Mammary epithelial cell (primary cell): ENCODE measurements at regions of chr5 and their contacts with region 1.

Region 1: GRCh38 chr5:59673438-59674058 is 220.0 kb downstream of the PDE4D start:
- DNase-seq: peak; percentile 37
- H3K4me3 ChIP-seq: no peak overlapping the region
- H3K27ac ChIP-seq: no peak overlapping the region
- H3K4me1 ChIP-seq: no peaks in the 10 kb centered on the region
- H3K27me3 ChIP-seq: no peaks in the 10 kb centered on the region
- CTCF ChIP-seq: peak; percentile 58 to 67

Region 2: DNA sequence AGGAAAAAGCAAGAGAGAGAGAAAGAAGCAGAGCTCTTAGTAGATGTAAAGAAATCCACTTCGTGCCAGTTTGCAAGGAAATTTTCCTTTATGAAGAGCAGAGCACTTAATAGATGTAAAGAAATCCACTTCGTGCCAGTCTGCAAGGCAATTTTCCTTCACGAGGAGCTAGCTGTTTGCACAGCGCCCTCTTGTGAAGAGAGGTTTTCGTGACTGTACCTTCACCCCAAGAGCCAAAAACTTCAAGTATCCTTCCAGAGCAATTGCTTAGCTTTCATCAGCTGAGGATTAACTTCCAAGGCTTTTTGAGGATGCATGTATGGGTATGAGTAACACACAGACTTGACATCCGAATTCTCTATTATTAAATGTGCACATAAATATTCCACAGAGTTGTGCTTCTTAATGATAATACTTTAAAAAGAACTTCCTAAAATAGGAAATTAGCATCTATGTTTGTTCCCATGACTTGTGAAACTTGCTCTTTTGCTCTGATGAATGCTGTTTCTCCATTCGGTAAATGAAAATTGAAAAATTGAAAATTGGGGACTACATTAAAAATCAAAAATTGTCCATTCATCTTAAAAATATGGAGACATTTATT is 305.7 kb before region 1 on chr5:
- CTCF ChIA-PET with region 1: interaction called, 11 read pairs
- dilution Hi-C with region 1: no loop called
- in situ Hi-C with region 1: no loop called
- intact Hi-C with region 1: no loop called
- DNase-seq: peak; percentile 44
- H3K4me3 ChIP-seq: no peak overlapping the region
- H3K27ac ChIP-seq: no peak overlapping the region
- H3K4me1 ChIP-seq: no peaks in the 10 kb centered on the region
- H3K27me3 ChIP-seq: no peaks in the 10 kb centered on the region
- CTCF ChIP-seq: peak; percentile 78 to 88

Region 3: GRCh38 chr5:59380350-59380951 is 293.1 kb before region 1 on chr5:
- CTCF ChIA-PET with region 1: no interaction called
- dilution Hi-C with region 1: no loop called
- in situ Hi-C with region 1: loop called (anchors 10 to 25 kb)
- intact Hi-C with region 1: no loop called
- DNase-seq: peak; percentile 71
- H3K4me3 ChIP-seq: no peak overlapping the region
- H3K27ac ChIP-seq: no peak overlapping the region
- H3K4me1 ChIP-seq: peaks cover 2% of the 10 kb centered on the region
- H3K27me3 ChIP-seq: no peaks in the 10 kb centered on the region
- CTCF ChIP-seq: peak; percentile 47 to 50

Region 4: DNA sequence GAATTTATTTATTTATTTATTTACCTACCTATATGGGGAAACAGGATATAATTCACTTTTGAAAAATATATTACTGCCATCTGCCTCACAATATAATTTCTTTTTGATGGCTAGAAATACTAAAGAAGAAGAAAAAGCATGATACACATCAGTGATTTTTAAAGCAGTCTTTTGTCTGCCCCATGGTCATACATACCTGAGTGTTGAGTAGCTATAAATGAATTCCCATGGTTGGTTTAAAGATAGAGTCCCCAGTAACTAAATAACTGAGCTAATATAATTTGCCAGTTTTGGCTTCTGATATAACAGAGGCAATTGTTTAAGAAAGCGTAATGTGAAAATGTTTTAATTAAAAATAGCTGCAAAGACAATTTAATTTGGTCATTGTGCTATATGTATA is 227.8 kb before region 1 on chr5:
- CTCF ChIA-PET with region 1: no interaction called
- dilution Hi-C with region 1: no loop called
- in situ Hi-C with region 1: no loop called
- intact Hi-C with region 1: no loop called
- DNase-seq: peak; percentile 11
- H3K4me3 ChIP-seq: no peak overlapping the region
- H3K27ac ChIP-seq: no peak overlapping the region
- H3K4me1 ChIP-seq: no peaks in the 10 kb centered on the region
- H3K27me3 ChIP-seq: no peaks in the 10 kb centered on the region
- CTCF ChIP-seq: no peak

Region 5: DNA sequence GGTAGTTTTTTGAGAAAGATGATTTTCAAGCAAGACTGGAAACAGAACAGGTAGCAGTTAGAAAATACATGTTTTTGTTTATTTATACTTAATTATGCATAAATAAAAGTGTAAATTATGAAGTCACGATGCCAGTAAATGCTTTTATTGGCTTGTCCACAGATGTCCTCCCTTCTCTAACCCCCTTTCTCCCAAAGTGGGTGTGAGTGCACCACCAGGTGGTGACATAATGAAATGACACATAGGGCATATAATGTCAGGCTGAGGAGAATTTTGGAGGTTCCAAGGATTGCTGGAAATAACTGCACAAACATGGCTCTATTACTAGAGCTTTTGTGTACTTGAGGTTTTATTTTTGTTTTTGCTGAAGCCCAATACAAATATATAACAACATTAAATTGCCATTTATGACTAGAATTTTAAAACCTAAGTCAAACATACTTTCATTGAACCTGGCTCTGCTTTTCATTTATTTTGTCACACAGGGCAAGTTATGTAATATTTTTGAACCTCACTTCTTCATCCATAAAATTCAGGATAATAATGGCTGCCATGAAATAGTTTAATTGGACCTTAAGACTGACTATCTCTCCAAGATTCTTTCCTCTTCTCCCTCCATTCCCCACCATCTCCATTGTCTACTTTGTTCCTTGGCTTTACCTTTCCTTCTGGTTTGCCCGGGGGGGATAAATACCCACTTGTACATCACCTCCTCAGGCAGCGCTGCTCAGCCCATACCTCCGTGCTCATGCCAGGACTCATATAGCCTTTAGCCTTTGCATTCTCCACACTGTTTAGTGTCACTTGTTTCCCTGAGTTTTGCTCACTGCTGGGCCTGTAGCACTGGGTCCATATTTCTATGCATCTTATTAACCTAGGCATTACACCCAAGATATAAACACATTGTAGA is 51.2 kb after region 1 on chr5:
- CTCF ChIA-PET with region 1: no interaction called
- dilution Hi-C with region 1: no loop called
- in situ Hi-C with region 1: no loop called
- intact Hi-C with region 1: loop called (anchors 1 kb)
- DNase-seq: peak; percentile 35
- H3K4me3 ChIP-seq: no peak overlapping the region
- H3K27ac ChIP-seq: no peak overlapping the region
- H3K4me1 ChIP-seq: peaks cover 19% of the 10 kb centered on the region
- H3K27me3 ChIP-seq: no peaks in the 10 kb centered on the region
- CTCF ChIP-seq: peak; percentile 79 to 80

Region 6: DNA sequence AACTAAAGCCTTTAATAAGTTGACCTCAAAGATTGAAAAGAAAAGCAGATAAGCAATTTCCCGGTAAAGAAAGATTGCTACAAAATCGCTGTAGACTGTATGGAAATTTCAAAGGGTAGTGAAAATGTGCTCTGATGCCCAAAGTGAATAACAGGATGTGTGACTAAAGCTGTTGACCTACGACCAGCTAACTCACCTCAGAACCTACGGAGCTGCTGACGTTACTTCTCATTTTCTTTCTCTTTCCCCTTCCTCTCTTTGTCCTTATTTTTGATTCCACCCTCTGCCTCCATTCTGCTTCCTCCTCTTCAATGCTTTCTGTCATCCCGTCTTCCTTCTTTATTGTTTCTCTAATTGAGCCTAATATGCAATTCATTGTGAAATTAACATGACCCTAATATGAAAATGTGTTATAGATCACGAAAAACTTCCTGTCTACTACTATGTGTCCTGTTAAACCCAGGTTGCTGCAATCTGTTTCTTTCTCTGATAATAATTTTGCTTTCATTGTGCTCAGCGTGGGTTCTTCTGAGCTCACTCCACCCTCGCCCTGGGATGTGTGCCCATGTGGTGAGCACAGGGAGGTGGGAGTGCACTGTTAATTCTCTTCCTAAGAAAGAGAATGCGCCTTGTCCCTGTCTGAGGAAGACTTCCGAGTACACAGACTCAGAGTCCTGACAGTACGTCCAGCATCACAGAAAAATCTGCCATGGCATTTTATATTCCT is 117.0 kb after region 1 on chr5:
- CTCF ChIA-PET with region 1: no interaction called
- dilution Hi-C with region 1: no loop called
- in situ Hi-C with region 1: no loop called
- intact Hi-C with region 1: no loop called
- DNase-seq: no peak
- H3K4me3 ChIP-seq: no peak overlapping the region
- H3K27ac ChIP-seq: no peak overlapping the region
- H3K4me1 ChIP-seq: peaks cover 46% of the 10 kb centered on the region
- H3K27me3 ChIP-seq: no peaks in the 10 kb centered on the region
- CTCF ChIP-seq: no peak

Region 7: DNA sequence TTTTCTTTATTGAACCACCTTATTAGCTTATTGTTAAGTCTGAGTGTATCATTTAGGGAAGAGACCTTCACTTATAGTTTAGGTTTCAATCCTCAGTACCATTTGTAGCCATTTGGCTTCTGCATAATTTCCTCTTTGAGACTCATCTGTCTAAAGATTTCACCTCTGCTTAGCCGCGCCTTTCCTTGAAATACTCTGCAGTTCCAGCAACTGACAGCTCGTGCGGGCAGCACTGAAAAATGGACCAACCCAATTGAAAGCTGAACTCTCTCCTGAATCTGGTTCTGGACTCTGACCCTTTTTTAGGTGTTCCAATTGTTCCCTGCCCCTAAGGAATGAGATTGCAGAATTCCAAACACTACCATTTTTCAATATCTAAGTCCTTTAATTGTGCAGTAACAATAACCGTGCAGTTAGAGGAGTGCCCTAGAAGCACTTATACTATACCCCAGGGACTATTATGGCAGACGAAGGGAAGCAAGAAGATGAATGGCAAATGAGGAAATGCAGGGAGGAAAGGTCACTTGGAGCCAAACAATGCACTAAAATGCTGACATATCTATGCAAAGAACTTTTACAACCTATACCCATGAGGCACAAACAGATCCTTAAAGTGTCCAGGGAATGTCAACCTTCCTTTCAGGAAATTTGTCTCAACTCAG is 270.0 kb after region 1 on chr5:
- CTCF ChIA-PET with region 1: no interaction called
- dilution Hi-C with region 1: no loop called
- in situ Hi-C with region 1: no loop called
- intact Hi-C with region 1: no loop called
- DNase-seq: no peak
- H3K4me3 ChIP-seq: no peak overlapping the region
- H3K27ac ChIP-seq: no peak overlapping the region
- H3K4me1 ChIP-seq: no peaks in the 10 kb centered on the region
- H3K27me3 ChIP-seq: peaks cover 18% of the 10 kb centered on the region
- CTCF ChIP-seq: no peak